Heart left ventricle (tissue), 16 donors: ENCODE measurements at regions of chr6 and their contacts with region 1.

Region 1: DNA sequence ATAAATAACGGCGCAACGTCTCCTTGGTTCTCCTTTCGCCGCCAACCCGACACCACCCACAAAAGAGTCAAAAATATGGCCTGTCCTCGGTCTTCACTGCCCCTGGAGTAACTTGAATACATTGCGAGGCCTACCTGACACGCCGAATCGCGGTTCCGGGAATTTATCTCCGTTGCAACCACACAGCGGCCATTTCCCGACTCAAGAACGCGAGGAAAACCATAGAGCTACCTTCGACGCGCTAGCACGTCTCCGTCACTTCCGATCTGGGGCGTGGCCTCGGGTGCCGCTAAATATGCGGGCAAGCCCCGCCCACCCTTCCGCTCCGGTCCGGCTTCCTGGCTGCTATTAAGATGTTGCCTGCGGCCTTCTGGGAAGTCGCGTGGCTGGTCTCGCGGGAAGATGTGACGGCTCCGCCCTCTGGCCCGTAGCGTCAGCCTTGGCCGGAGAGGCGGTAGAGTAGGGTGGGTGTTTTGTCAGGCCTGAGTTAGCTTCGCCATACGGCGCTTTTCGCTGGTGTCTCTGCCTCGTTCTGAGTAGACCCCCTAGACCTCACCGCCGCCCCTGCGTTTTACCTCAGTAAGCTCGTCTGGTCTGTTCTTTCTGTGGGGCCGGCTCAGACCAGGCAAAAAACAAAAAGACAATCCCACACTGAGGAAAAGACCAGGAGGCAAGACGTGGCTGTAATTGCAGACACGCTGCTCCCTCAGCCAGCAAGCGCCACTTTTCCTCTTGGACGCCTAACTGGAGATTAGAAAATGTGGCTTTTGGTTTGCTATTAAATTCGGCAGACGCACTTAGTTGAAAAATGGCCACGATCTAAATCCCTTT is at the start of gene BCLAF1:
- DNase-seq: peak; percentile 99 to 100 (median 100)
- ATAC-seq: peak; percentile 94 to 99 (median 97)
- H3K4me3 ChIP-seq: peak within 1 kb of the TSS; percentile 66 to 98 (median 86)
- H3K27ac ChIP-seq: peak within 1 kb of the TSS; percentile 96 to 100 (median 100)
- H3K4me1 ChIP-seq: peaks cover 3 to 50% (median 43%) of the 10 kb centered on the region in 12 donors
- H3K27me3 ChIP-seq: no peaks in the 10 kb centered on the region
- CTCF ChIP-seq: no peak
- POLR2A ChIP-seq: peak; percentile 80 to 99
- total RNA-seq, gene BCLAF1: 56.1 to 109 (median 96.0) TPM

Region 2: DNA sequence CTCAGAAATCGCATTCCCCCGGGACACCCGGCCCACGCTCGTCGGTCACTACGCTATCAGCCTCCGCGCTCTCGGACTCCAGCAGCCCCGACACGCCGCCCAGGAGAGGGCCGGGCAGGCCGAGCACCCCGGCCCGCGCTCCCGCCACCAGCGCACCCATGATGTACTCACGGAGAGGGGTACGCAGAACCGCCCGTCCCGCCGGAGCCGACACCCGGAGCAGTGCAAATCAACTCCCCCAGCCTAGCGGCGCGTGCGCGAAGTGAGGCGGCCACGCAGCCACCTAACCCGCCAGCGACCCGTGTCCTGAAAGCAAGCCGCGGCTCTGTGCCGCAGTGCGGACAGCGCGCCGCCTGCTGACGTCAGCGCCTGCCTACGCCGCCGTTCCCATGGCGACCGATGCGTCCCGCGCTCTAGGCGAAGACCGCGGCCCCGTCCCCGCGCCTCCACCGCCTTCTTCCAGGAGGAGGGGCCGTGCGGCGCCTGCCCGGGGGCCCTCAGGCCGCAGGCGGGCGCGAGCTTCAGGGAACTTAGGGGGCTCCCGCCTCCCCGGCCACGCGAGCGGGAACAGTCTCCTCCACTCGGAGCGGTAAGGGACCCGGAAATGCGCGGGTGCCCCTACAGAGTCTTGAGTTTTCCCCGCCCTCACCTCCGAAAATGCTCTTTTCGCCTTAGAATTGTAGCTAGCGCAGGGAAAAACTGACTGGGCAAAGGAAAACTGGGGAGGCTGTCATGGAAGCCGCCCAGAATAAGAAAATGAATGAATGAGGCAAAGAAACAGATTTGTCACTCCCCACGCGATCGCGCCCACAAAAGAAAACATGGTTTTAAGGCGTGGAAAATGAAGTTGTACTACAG is 792.2 kb before region 1 on chr6 and contains the start of gene AHI1:
- intact Hi-C with region 1: loop called in 2 of 10 experiments (anchors 1 to 10 kb)
- DNase-seq: peak; percentile 93 to 98 (median 96)
- ATAC-seq: peak; percentile 92 to 98 (median 97)
- H3K4me3 ChIP-seq: peak within 1 kb of the TSS; percentile 73 to 96 (median 88)
- H3K27ac ChIP-seq: peak within 1 kb of the TSS; percentile 82 to 99 (median 94)
- H3K4me1 ChIP-seq: peaks cover 0 to 24% (median 11%) of the 10 kb centered on the region in 12 donors
- H3K27me3 ChIP-seq: no peaks in the 10 kb centered on the region
- CTCF ChIP-seq: peak in 5 of 12 donors; percentile 9 to 36 (median 17)
- POLR2A ChIP-seq: peak; percentile 6 to 89
- total RNA-seq, gene AHI1: 6.3 to 17.1 (median 10.5) TPM

Region 3: GRCh38 chr6:136249811-136250685 is 39.7 kb before region 1 on chr6 and contains the start of gene MTFR2:
- intact Hi-C with region 1: loop called in 9 of 10 experiments (anchors 1 to 5 kb)
- DNase-seq: peak; percentile 94 to 97 (median 97)
- ATAC-seq: peak; percentile 98 to 100 (median 99)
- H3K4me3 ChIP-seq: peak within 1 kb of the TSS; percentile 42 to 82 (median 67)
- H3K27ac ChIP-seq: peak within 1 kb of the TSS in 6 of 12 donors; percentile 25 to 65 (median 54)
- H3K4me1 ChIP-seq: peaks cover 0 to 19% (median 13%) of the 10 kb centered on the region in 12 donors
- H3K27me3 ChIP-seq: no peaks in the 10 kb centered on the region
- CTCF ChIP-seq: no peak
- POLR2A ChIP-seq: peak in 1 of 2 donors; percentile 46
- total RNA-seq, gene MTFR2: 0.15 to 1.0 (median 0.34) TPM in 4 of 9 donors, not detected in the others